Naive thymus-derived CD8-positive, alpha-beta T cell (primary cell): ENCODE measurements at regions of chr7 and their contacts with region 1.

Region 1: DNA sequence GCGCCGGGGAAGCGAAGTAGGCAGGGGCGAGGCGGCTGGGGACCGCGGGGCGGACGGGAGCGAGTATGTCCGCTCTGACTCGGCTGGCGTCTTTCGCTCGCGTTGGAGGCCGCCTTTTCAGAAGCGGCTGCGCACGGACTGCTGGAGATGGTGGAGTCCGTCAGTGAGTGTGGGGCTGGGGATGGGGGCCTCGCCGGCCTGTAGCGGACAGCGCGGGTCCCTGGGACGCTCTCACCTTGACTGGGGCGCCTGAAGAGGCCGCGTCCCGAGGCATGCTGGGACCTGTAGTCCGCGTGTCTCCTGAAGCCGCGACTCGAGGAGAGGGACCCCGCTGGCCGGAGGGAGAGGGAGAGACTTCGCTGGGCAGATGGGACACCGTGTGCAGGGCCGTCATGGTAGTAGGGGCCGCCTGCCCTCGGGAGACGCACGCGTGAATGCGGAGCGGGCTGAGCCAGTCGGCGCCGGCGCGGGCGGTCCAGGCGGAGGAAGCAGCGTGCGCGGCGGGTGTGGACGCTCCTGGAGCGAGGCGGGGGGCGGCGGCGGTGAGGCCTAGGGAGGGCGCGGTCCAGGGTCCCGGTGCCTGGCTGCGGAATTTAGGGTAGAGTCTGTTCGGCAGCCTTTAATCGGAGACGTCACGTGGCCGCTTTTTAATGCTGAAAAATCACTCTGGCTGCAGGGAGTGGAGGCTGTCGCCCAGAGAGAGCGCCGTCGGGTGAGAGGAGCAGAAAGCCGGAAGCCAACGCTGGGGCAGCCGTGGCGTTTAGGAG is at the start of gene NDUFB2:
- DNase-seq: peak; percentile 43 to 93 (median 86)
- ATAC-seq: peak; percentile 87
- H3K4me3 Mint-ChIP-seq: peak within 1 kb of the TSS; percentile 92 to 100 (median 99)
- H3K27ac Mint-ChIP-seq: peak within 1 kb of the TSS; percentile 95 to 99 (median 98)
- H3K4me1 Mint-ChIP-seq: peaks cover 17 to 49% (median 44%) of the 10 kb centered on the region in 4 donors
- H3K27me3 Mint-ChIP-seq: no peaks in the 10 kb centered on the region
- polyA plus RNA-seq, gene NDUFB2: 434 to 524 (median 517) TPM

Region 2: DNA sequence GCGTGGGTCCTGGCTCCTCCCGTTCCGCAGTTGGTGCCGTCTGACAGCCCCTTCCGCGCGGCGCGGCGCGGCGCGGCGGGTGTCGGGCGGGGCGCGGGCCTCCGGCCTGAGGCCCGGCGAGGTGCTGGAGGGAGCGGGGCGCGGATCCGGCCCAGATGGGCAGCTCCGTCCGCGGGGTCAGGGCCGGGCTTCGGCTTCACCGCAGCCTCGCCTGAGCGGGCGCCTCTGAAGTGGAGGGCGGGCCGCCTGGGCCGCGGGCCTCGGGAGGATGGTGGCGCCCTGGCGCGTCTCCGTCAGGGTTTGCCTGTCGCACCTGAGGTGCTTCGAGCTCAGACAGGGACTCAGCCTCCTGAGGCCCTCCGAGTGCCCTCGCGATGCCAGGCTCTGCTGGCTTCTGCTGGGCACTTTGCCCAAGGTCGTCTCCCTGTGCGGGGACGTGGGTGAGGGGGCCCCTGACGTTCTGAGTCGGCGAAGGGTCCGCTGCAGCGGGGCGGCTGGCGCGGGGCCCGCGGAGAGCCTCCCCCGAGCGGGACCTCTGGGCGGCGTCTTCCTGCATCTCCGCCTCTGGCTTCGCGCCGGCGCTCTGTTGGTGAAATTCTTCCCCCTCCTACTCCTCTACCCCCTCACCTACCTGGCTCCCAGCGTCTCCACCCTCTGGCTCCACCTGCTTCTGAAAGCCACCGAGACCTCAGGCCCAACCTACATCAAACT is 23.6 kb before region 1 on chr7:
- POLR2A ChIA-PET with region 1: interaction called, 14 read pairs
- DNase-seq: peak; percentile 50 to 77 (median 63)
- ATAC-seq: peak; percentile 82 to 84
- H3K4me3 Mint-ChIP-seq: peak overlapping the region; percentile 86 to 94 (median 90)
- H3K27ac Mint-ChIP-seq: peak overlapping the region; percentile 81 to 97 (median 93)
- H3K4me1 Mint-ChIP-seq: peaks cover 14 to 53% (median 42%) of the 10 kb centered on the region in 4 donors
- H3K27me3 Mint-ChIP-seq: no peaks in the 10 kb centered on the region

Region 3: DNA sequence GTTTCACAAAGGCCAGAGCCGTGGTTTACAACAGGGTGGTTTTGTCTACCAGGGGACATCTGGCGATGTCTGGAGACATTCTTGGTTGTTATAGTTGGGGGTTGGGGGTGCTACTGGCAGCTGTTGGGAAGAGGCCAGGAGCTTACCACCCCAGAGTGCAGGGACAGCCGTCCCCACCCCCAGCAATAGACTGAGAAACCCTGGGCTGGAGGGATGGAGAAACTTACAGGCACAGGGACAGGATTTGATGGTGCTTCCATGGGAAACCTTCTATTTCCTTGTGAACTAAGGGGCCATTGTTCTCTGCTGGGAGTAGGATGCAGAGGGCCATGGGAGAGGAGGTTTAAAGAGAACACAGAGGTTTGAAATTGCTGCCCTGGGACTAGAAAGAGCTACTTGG is 13.2 kb before region 1 on chr7:
- POLR2A ChIA-PET with region 1: no interaction called
- DNase-seq: no peak
- ATAC-seq: no peak
- H3K4me3 Mint-ChIP-seq: no peak overlapping the region
- H3K27ac Mint-ChIP-seq: peak overlapping the region in 2 of 10 donors; percentile 27 to 48
- H3K4me1 Mint-ChIP-seq: peaks cover 0 to 4% (median 2%) of the 10 kb centered on the region in 4 donors
- H3K27me3 Mint-ChIP-seq: no peaks in the 10 kb centered on the region